ENCODE measurements at regions of chr16 and their contacts with region 1.

Region 1: DNA sequence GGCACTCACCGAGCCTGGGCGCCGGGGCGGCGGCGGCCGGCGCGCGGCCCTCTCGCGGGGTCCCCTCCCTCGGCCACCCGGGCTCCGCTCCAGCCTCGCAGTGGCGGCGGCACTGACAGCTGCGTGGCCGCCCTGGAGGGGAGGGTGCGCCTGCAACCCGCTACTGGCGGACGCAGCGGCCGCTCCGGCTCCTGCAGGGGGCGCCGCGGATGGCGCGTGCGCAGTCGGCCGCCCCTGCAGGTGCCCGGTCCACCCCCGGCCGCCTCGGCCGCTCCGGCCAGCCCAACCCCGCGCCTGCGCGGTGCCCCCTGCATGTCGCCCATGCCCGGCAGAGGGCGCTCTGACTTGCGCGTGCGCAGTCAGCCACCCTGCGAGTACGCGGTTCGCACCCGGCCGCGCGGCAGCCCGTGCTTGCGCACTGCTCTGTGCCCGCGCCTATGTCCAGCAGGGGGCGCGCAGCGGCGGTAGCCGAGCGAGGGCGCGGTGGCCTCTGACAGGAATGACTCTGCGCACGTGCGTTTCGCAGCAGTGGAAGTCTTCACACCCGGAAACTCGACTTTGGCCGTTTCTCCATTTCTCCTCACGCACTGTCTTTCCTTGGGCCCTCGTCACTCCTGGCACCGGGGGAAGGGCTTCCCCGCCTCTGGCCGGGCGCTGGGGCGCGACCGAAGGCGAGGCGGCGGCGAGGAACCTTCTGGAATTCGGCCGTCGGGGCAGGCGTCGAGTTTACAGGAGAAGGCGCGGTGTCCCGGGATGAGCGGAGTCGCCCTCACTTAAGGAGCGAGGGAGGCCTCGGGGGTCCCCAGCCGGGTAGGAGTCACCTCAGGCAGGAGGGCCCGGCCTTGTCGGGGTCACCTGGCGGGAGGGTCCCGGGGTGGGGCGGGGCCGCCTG is at the start of gene ABCA3:
- DNase-seq: peak; percentile 89
- H3K4me3 ChIP-seq: peak within 1 kb of the TSS; percentile 29 to 58 (median 53)
- H3K27ac ChIP-seq: no peak within 1 kb of the TSS
- H3K4me1 ChIP-seq: peaks cover 10% of the 10 kb centered on the region
- H3K27me3 ChIP-seq: peaks cover 3% of the 10 kb centered on the region
- CTCF ChIP-seq: peak; percentile 87 to 94
- total RNA-seq, gene ABCA3: 0.85 to 4.0 TPM

Region 2: GRCh38 chr16:2194852-2195321 is 145.9 kb before region 1 on chr16:
- CTCF ChIA-PET with region 1: interaction called, 4 read pairs
- dilution Hi-C with region 1: no loop called
- in situ Hi-C with region 1: no loop called
- intact Hi-C with region 1: loop called (anchors 1 kb)
- DNase-seq: peak; percentile 54
- H3K4me3 ChIP-seq: peak overlapping the region in 1 of 3 experiments; percentile 44
- H3K27ac ChIP-seq: no peak overlapping the region
- H3K4me1 ChIP-seq: peaks cover 20% of the 10 kb centered on the region
- H3K27me3 ChIP-seq: no peaks in the 10 kb centered on the region
- CTCF ChIP-seq: peak; percentile 59 to 74

Region 3: DNA sequence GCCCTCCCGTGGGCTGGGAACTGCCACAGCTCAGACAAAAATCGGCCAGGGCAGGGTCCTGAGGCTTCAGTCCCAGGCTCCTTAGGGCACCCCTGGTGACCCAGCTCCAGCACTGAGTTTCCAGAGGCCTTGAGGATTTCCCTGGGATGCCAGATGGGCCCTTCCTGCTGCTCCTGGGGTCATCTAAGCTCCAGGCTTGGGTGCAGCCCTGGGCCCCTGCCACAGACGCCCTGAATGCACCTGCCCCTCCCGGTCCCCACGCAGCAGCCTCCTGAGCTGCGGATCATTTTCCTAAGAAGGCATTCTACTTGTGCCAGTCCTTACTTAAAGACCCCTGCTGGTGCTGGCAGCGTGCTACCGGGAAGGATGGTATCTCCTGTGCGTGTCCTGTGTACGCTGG is 66.9 kb before region 1 on chr16:
- CTCF ChIA-PET with region 1: no interaction called
- dilution Hi-C with region 1: no loop called
- in situ Hi-C with region 1: no loop called
- intact Hi-C with region 1: no loop called
- DNase-seq: no peak
- H3K4me3 ChIP-seq: no peak overlapping the region
- H3K27ac ChIP-seq: no peak overlapping the region
- H3K4me1 ChIP-seq: peaks cover 11% of the 10 kb centered on the region
- H3K27me3 ChIP-seq: peaks cover 1% of the 10 kb centered on the region
- CTCF ChIP-seq: no peak

Region 4: DNA sequence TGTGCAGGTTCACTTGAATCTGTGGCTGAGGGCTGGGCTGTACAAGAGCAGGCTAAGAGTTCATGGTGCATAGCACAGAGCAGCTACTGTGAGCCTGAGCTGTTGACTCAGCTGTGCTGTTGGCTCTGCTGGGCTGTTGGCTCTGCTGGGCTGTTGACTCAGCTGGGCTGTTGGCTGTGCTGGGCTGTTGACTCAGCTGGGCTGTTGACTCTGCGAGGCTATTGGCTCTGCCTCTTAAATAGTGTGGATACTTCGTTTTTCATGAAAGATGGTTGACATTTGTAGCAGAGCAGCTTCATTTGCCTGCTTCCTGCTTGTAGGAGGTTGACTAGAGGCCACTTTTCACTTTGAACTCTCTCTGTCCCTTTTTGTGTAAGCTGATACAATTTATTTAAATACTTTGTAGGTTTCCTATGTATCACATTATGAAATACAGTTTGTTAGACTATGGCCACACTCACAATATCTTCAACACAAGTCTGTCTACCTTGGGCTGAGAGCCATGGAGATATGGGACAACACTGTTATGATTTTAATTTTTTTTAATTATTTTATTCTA is 48.1 kb after region 1 on chr16:
- CTCF ChIA-PET with region 1: interaction called, 3 read pairs
- dilution Hi-C with region 1: loop called (anchors 5 kb)
- in situ Hi-C with region 1: no loop called
- intact Hi-C with region 1: loop called (anchors 2 kb)
- DNase-seq: peak; percentile 76
- H3K4me3 ChIP-seq: no peak overlapping the region
- H3K27ac ChIP-seq: no peak overlapping the region
- H3K4me1 ChIP-seq: peaks cover 9% of the 10 kb centered on the region
- H3K27me3 ChIP-seq: no peaks in the 10 kb centered on the region
- CTCF ChIP-seq: no peak

Region 5: GRCh38 chr16:2429034-2429770 is 88.4 kb after region 1 on chr16 and contains the start of gene CCNF:
- CTCF ChIA-PET with region 1: no interaction called
- dilution Hi-C with region 1: no loop called
- in situ Hi-C with region 1: no loop called
- intact Hi-C with region 1: loop called (anchors 1 kb)
- DNase-seq: peak; percentile 92
- H3K4me3 ChIP-seq: peak within 1 kb of the TSS; percentile 72 to 87 (median 86)
- H3K27ac ChIP-seq: peak within 1 kb of the TSS; percentile 46
- H3K4me1 ChIP-seq: peaks cover 18% of the 10 kb centered on the region
- H3K27me3 ChIP-seq: no peaks in the 10 kb centered on the region
- CTCF ChIP-seq: no peak
- total RNA-seq, gene CCNF: 5.7 to 22.7 TPM

Region 6: GRCh38 chr16:2439598-2439997 is 98.8 kb after region 1 on chr16:
- CTCF ChIA-PET with region 1: no interaction called
- dilution Hi-C with region 1: no loop called
- in situ Hi-C with region 1: no loop called
- intact Hi-C with region 1: no loop called
- DNase-seq: no peak
- H3K4me3 ChIP-seq: no peak overlapping the region
- H3K27ac ChIP-seq: no peak overlapping the region
- H3K4me1 ChIP-seq: no peaks in the 10 kb centered on the region
- H3K27me3 ChIP-seq: no peaks in the 10 kb centered on the region
- CTCF ChIP-seq: no peak

Measured in mammary epithelial cell (primary cell).